K562 (cell line): ENCODE measurements at regions of chr20 and their contacts with region 1.

Region 1: DNA sequence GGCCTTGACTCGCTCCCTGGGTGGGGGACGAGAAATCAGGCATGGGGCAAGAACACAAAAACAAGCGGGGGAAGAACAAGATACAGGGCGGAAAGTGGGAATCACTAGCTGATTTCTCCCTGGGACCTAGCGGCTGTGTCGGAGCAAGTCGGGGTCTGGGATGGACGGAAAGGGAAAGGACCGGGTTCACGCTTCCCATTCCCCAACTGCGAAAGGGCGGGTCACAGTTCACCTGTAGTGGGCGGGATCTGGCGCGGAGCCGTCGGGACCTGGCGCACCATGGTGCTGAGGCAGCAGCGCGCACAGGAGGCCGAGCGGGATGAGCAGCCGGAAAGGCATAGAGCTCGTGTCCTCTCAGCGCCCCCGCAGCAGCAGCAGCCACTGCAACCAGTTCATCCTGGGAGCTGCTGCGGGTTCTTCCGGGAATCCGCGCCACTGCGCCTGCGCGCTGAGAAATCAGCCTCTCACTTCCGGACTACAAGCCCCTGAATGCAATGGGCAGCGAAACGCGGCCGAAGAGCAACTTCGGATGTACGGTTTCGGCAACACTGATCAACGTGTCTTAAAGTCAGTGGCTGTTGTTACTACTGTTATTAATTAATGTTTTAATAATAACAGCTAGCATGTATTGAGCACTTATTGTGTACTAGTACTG is at the start of gene EDEM2:
- DNase-seq: peak; percentile 92 to 98 (median 94)
- ATAC-seq: peak; percentile 95
- H3K4me3 ChIP-seq: peak within 1 kb of the TSS; percentile 60
- H3K27ac ChIP-seq: peak within 1 kb of the TSS; percentile 74
- H3K4me1 ChIP-seq: peaks cover 14 to 15% of the 10 kb centered on the region in 2 experiments; a peak in 4 of 5 replicates
- H3K27me3 ChIP-seq: no peaks in the 10 kb centered on the region
- CTCF ChIP-seq: peak in 2 of 3 experiments; percentile 33 to 41; a peak in 4 of 6 replicates
- EP300 ChIP-seq: no peak; the same call in 1 of the 2 replicates
- POLR2A ChIP-seq: peak; percentile 84
- RAD21 ChIP-seq: peak in 1 of 2 experiments; percentile 36; a peak in 2 of 4 replicates
- polyA plus RNA-seq, gene EDEM2: 7.3 to 9.1 TPM

Region 2: DNA sequence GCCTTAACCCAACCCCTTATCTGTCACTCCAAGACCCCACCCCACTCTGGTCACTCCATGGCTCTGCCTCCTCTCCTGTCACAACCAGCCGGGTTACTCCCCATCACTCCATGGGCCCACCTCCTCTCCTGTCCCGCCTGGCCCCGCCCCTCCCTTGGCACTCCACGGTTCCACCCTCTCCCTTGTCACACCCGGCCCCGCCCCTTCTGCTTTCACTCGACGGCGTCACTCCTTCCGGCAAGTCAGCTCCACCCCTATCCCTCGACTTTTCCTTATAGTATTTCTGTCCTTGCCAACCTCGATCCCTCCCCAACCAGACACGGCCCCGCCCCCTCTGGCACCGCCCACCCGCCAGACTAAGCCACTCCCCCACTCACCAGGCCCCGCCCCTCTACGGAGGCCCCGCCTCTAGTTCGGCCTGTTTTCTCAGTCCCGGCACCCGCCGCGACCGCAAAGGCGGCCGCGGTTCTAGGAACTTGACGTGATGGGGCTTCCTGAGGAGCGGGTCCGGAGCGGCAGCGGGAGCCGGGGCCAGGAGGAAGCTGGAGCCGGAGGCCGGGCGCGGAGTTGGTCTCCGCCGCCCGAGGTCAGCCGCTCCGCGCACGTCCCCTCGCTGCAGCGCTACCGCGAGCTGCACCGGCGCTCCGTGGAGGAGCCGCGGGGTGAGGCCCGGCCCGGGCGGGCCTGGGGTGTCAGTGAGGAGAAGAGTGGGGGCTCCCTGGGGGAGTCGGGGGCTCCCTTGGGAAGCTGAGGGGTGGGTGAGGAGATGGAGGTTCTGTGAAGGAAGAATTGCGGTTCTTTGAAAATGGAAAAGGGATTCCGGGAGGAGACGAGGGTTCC is 270.7 kb before region 1 on chr20 and contains the start of gene ACSS2:
- CTCF ChIA-PET with region 1: no interaction called
- POLR2A ChIA-PET with region 1: no interaction called
- in situ Hi-C with region 1: no loop called
- intact Hi-C with region 1: loop called (anchors 5 kb)
- DNase-seq: peak; percentile 93 to 99 (median 95)
- ATAC-seq: peak; percentile 86
- H3K4me3 ChIP-seq: peak within 1 kb of the TSS; percentile 90
- H3K27ac ChIP-seq: peak within 1 kb of the TSS; percentile 85
- H3K4me1 ChIP-seq: peaks cover 45 to 48% of the 10 kb centered on the region in 2 experiments; a peak in 4 of 5 replicates
- H3K27me3 ChIP-seq: no peaks in the 10 kb centered on the region; a peak in 1 of 5 replicates
- CTCF ChIP-seq: no peak
- EP300 ChIP-seq: no peak
- POLR2A ChIP-seq: peak; percentile 82
- RAD21 ChIP-seq: no peak
- polyA plus RNA-seq, gene ACSS2: 21.9 to 26.5 TPM

Region 3: GRCh38 chr20:35135867-35136586 is 11.0 kb before region 1 on chr20:
- CTCF ChIA-PET with region 1: no interaction called
- POLR2A ChIA-PET with region 1: interaction called, 10 read pairs
- in situ Hi-C with region 1: no loop called
- intact Hi-C with region 1: no loop called
- DNase-seq: peak in 1 of 4 experiments; percentile 38
- ATAC-seq: no peak
- H3K4me3 ChIP-seq: no peak overlapping the region
- H3K27ac ChIP-seq: no peak overlapping the region
- H3K4me1 ChIP-seq: peaks cover 0 to 4% of the 10 kb centered on the region in 2 experiments; a peak in 2 of 5 replicates
- H3K27me3 ChIP-seq: no peaks in the 10 kb centered on the region
- CTCF ChIP-seq: no peak
- EP300 ChIP-seq: no peak
- POLR2A ChIP-seq: no peak
- RAD21 ChIP-seq: no peak

Region 4: GRCh38 chr20:35192111-35192872 is 45.2 kb after region 1 on chr20:
- CTCF ChIA-PET with region 1: no interaction called
- POLR2A ChIA-PET with region 1: interaction called, 4 read pairs
- in situ Hi-C with region 1: loop called (anchors 5 kb)
- intact Hi-C with region 1: loop called (anchors 1 kb)
- DNase-seq: peak in 2 of 4 experiments; percentile 66 to 91
- ATAC-seq: peak; percentile 80
- H3K4me3 ChIP-seq: no peak overlapping the region
- H3K27ac ChIP-seq: peak overlapping the region; percentile 75
- H3K4me1 ChIP-seq: peaks cover 22 to 29% of the 10 kb centered on the region in 2 experiments
- H3K27me3 ChIP-seq: no peaks in the 10 kb centered on the region
- CTCF ChIP-seq: no peak
- EP300 ChIP-seq: peak; percentile 66; the same call in 1 of the 2 replicates
- POLR2A ChIP-seq: no peak
- RAD21 ChIP-seq: no peak

Region 5: GRCh38 chr20:35269055-35269781 is 122.2 kb after region 1 on chr20:
- CTCF ChIA-PET with region 1: interaction called, 28 read pairs
- POLR2A ChIA-PET with region 1: interaction called, 4 read pairs
- in situ Hi-C with region 1: loop called (anchors 5 kb)
- intact Hi-C with region 1: loop called (anchors 1 kb)
- DNase-seq: peak; percentile 80 to 83 (median 82)
- ATAC-seq: peak; percentile 86
- H3K4me3 ChIP-seq: no peak overlapping the region
- H3K27ac ChIP-seq: no peak overlapping the region
- H3K4me1 ChIP-seq: peaks cover 8 to 33% of the 10 kb centered on the region in 2 experiments; a peak in 4 of 5 replicates
- H3K27me3 ChIP-seq: no peaks in the 10 kb centered on the region
- CTCF ChIP-seq: peak; percentile 85 to 93 (median 90)
- EP300 ChIP-seq: no peak
- POLR2A ChIP-seq: no peak
- RAD21 ChIP-seq: peak; percentile 61 to 83